RWPE1 (cell line): ENCODE measurements at regions of chr10 and their contacts with region 1.

Region 1: GRCh38 chr10:44932517-44933450 is 21.6 kb downstream of the TMEM72 start:
- DNase-seq: peak; percentile 45
- H3K27ac ChIP-seq: no peak overlapping the region
- CTCF ChIP-seq: peak; percentile 83

Region 2: GRCh38 chr10:43888586-43888985 is 1044.2 kb before region 1 on chr10:
- CTCF ChIA-PET with region 1: no interaction called
- POLR2A ChIA-PET with region 1: no interaction called
- DNase-seq: no peak
- H3K27ac ChIP-seq: no peak overlapping the region
- CTCF ChIP-seq: no peak

Region 3: GRCh38 chr10:44974628-44975431 is 42.0 kb after region 1 on chr10:
- CTCF ChIA-PET with region 1: interaction called, 12 read pairs
- POLR2A ChIA-PET with region 1: no interaction called
- DNase-seq: peak; percentile 53
- H3K27ac ChIP-seq: peak overlapping the region; percentile 34; the same call in 1 of the 2 replicates
- CTCF ChIP-seq: peak; percentile 94